Activated B cell treated with CpG ODN at 0.5 μM for 24 hours (primary cell): ENCODE measurements at regions of chr17 and their contacts with region 1.

Region 1: GRCh38 chr17:76278952-76279741 is 14.0 kb downstream of the UBALD2 start:
- DNase-seq: peak; percentile 84
- ATAC-seq: peak; percentile 56
- H3K4me3 Mint-ChIP-seq: no peak overlapping the region
- H3K27ac Mint-ChIP-seq: no peak overlapping the region
- H3K4me1 Mint-ChIP-seq: peaks cover 35% of the 10 kb centered on the region
- H3K27me3 Mint-ChIP-seq: no peaks in the 10 kb centered on the region
- CTCF ChIP-seq: peak; percentile 83

Region 2: GRCh38 chr17:75614006-75614405 is 665.1 kb before region 1 on chr17:
- CTCF ChIA-PET with region 1: no interaction called
- POLR2A ChIA-PET with region 1: interaction called, 11 read pairs
- intact Hi-C with region 1: no loop called
- DNase-seq: no peak
- ATAC-seq: no peak
- H3K4me3 Mint-ChIP-seq: no peak overlapping the region
- H3K27ac Mint-ChIP-seq: no peak overlapping the region
- H3K4me1 Mint-ChIP-seq: peaks cover 3% of the 10 kb centered on the region
- H3K27me3 Mint-ChIP-seq: no peaks in the 10 kb centered on the region
- CTCF ChIP-seq: no peak

Region 3: DNA sequence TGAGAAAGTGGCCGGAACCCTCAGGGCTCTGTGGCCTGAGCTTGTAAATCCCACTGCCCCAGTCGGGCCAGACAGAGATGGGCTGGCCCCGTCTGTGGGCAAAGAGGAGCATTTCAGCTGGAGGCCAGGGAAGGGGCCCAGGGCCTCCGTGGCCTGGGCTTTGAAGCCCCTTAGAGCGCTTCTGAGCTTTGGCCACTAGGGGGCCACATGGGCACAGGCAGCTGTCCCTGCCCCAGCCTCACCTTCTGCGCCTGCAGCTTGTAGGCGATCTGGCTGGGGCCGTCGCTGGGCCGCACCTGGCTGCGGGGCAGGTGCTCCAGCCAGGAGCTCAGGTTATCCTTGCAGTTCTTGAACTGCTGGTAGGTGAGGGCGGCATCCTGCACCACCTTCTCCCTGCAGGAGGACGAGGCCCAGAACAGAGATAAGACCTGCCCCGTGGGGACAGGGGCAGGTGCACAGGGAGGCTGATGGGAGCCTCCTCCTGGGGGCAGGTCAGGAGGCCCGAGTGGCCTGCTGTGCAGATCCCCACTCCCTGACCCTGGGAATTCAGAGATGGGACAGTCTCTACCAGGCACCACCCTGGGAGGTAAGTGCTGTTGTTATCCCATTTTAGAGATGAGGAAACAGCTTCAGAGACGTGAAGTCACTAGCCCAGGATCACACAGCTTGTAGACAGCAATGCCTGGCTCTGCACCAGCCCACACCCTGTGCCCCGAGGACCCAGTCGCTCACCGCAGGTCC is 264.8 kb before region 1 on chr17:
- CTCF ChIA-PET with region 1: interaction called, 33 read pairs
- POLR2A ChIA-PET with region 1: interaction called, 5 read pairs
- intact Hi-C with region 1: loop called (anchors 1 kb)
- DNase-seq: peak; percentile 66
- ATAC-seq: peak; percentile 99
- H3K4me3 Mint-ChIP-seq: no peak overlapping the region
- H3K27ac Mint-ChIP-seq: no peak overlapping the region
- H3K4me1 Mint-ChIP-seq: peaks cover 5% of the 10 kb centered on the region
- H3K27me3 Mint-ChIP-seq: no peaks in the 10 kb centered on the region
- CTCF ChIP-seq: no peak

Region 4: DNA sequence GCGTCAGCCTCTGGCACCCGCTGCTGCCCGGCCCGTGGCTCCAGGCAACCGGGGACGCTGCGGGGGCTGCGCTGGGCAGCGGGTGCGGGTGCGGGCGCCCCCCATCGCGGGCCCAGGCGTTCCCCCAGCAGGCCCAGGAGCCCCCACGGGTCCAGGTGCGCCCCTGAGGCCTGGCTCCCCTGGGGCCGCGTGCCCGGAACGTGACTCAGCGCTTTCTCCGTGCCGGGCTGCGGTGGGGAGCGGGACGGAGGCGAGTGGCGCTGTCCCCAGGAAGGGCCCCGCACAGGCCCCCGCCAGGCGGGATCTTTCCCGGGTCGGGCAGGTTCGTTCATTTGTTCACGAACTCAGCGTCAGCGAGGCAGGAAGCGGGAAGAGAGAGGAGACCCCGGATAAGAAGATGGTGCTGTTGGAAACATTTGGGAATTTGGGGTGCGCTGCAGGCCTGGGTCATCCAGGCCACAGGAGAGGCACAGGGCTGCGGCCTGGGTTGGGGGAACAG is 157.2 kb before region 1 on chr17:
- CTCF ChIA-PET with region 1: interaction called, 228 read pairs
- POLR2A ChIA-PET with region 1: interaction called, 257 read pairs
- intact Hi-C with region 1: loop called (anchors 1 kb)
- DNase-seq: no peak
- ATAC-seq: peak; percentile 29
- H3K4me3 Mint-ChIP-seq: peak overlapping the region; percentile 62
- H3K27ac Mint-ChIP-seq: peak overlapping the region; percentile 50
- H3K4me1 Mint-ChIP-seq: peaks cover 17% of the 10 kb centered on the region
- H3K27me3 Mint-ChIP-seq: peaks cover 3% of the 10 kb centered on the region
- CTCF ChIP-seq: no peak

Region 5: DNA sequence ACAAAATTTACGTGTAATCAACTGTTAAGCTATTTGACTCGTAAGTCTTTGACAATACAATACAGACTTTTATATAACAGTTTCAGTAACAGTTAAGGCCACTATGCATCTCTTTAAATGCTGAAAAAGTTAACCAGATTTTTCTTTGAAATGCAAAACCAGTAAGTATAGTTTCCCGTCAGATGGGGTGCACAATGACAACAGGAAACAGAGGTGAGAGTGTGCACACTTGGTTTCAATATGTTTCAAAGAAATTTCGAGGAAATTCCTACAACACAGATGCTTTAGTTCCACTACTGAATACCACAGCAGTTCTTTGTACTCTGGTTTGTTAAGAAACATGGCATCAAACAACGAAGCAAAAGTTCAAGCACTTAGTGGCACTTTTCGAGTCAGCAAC is 87.3 kb before region 1 on chr17:
- CTCF ChIA-PET with region 1: interaction called, 99 read pairs
- POLR2A ChIA-PET with region 1: interaction called, 481 read pairs
- intact Hi-C with region 1: no loop called
- DNase-seq: no peak
- ATAC-seq: peak; percentile 80
- H3K4me3 Mint-ChIP-seq: peak overlapping the region; percentile 38
- H3K27ac Mint-ChIP-seq: peak overlapping the region; percentile 69
- H3K4me1 Mint-ChIP-seq: peaks cover 41% of the 10 kb centered on the region
- H3K27me3 Mint-ChIP-seq: no peaks in the 10 kb centered on the region
- CTCF ChIP-seq: no peak

Region 6: DNA sequence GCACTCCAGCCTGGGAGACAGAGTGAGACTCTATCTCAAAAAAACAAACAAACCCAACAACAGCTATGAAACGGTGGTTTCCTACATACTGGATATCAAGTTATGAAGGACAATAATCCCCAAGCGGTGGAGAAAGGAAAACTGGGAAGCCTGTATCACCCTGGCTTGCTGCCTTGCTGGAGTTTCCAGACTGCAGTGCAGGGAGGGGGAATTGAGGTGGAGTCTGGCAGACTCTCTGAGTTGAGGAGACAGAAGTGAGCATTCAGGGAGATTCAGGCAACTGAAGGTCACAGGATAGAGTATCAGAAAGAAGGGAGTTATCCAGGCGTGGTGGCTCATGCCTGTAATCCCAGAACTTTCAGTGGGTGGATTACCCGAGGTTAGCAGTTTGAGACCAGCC is 17.0 kb after region 1 on chr17:
- CTCF ChIA-PET with region 1: interaction called, 43 read pairs
- POLR2A ChIA-PET with region 1: interaction called, 8 read pairs
- intact Hi-C with region 1: no loop called
- DNase-seq: no peak
- ATAC-seq: no peak
- H3K4me3 Mint-ChIP-seq: no peak overlapping the region
- H3K27ac Mint-ChIP-seq: no peak overlapping the region
- H3K4me1 Mint-ChIP-seq: peaks cover 3% of the 10 kb centered on the region
- H3K27me3 Mint-ChIP-seq: no peaks in the 10 kb centered on the region
- CTCF ChIP-seq: no peak

Region 7: DNA sequence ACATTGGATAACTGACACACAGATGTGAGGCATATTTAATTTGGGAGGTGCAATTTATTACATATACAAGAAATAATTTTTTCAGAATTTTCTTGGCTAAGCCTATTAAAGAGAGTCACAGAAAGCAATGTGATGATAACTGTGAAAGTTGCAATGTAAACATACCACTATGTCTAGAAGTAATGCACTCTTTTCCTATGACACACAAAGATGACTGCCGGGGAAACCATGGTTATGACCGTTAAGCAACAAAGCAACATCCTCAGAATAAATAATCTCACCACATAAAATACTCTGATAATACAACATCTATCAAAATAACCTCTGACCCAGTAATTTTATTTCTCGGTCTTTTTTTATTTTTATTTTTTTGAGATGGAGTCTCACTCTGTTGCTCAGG is 39.4 kb after region 1 on chr17:
- CTCF ChIA-PET with region 1: no interaction called
- POLR2A ChIA-PET with region 1: no interaction called
- intact Hi-C with region 1: no loop called
- DNase-seq: no peak
- ATAC-seq: no peak
- H3K4me3 Mint-ChIP-seq: no peak overlapping the region
- H3K27ac Mint-ChIP-seq: no peak overlapping the region
- H3K4me1 Mint-ChIP-seq: no peaks in the 10 kb centered on the region
- H3K27me3 Mint-ChIP-seq: no peaks in the 10 kb centered on the region
- CTCF ChIP-seq: no peak

Region 8: GRCh38 chr17:76345377-76345974 is 66.3 kb after region 1 on chr17:
- CTCF ChIA-PET with region 1: no interaction called
- POLR2A ChIA-PET with region 1: no interaction called
- intact Hi-C with region 1: no loop called
- DNase-seq: no peak
- ATAC-seq: no peak
- H3K4me3 Mint-ChIP-seq: no peak overlapping the region
- H3K27ac Mint-ChIP-seq: no peak overlapping the region
- H3K4me1 Mint-ChIP-seq: no peaks in the 10 kb centered on the region
- H3K27me3 Mint-ChIP-seq: no peaks in the 10 kb centered on the region
- CTCF ChIP-seq: no peak

Region 9: GRCh38 chr17:76700617-76701470 is 421.7 kb after region 1 on chr17:
- CTCF ChIA-PET with region 1: no interaction called
- POLR2A ChIA-PET with region 1: no interaction called
- intact Hi-C with region 1: no loop called
- DNase-seq: no peak
- ATAC-seq: no peak
- H3K4me3 Mint-ChIP-seq: no peak overlapping the region
- H3K27ac Mint-ChIP-seq: no peak overlapping the region
- H3K4me1 Mint-ChIP-seq: peaks cover 17% of the 10 kb centered on the region
- H3K27me3 Mint-ChIP-seq: no peaks in the 10 kb centered on the region
- CTCF ChIP-seq: no peak

Region 10: DNA sequence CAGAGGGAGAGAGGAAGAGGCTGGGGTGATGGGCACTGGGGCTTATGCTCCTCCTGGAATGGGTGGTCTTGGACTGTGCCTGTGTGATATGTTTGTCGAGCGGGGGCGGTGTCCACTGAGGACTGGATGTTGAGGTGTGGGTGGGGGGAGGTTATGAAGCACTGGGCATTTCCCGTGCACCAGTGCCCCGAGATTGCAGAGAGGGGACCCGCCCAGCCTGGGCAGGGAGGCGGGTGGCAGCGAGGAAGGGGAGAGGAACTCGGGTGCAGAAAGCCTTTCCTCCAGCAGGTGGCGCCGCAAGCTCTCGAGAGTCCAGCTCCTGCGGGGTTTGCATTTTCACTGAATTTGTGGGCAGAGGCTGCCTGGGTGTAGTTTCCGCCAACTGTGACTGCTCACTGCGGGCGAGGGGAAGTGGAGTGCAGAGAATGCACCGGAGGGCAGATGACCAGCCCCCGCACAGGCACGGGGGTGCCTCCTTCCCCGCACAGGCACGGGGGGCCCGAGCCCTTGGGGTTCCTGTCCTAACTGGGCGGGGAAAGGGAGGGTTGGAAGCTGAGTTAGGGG is 1052.2 kb after region 1 on chr17:
- CTCF ChIA-PET with region 1: no interaction called
- POLR2A ChIA-PET with region 1: no interaction called
- intact Hi-C with region 1: no loop called
- DNase-seq: peak; percentile 90
- ATAC-seq: peak; percentile 91
- H3K4me3 Mint-ChIP-seq: peak overlapping the region; percentile 76
- H3K27ac Mint-ChIP-seq: peak overlapping the region; percentile 78
- H3K4me1 Mint-ChIP-seq: peaks cover 57% of the 10 kb centered on the region
- H3K27me3 Mint-ChIP-seq: no peaks in the 10 kb centered on the region
- CTCF ChIP-seq: peak; percentile 32